CD8-positive, alpha-beta memory T cell (primary cell): ENCODE measurements at regions of chr16 and their contacts with region 1.

Region 1: GRCh38 chr16:81873843-81874752 is 95.0 kb downstream of the PLCG2 start:
- DNase-seq: peak in 4 of 5 donors; percentile 28 to 74 (median 42)
- H3K4me3 ChIP-seq: no peak overlapping the region
- H3K4me3 Mint-ChIP-seq: peak overlapping the region in 4 of 7 donors; percentile 12 to 52 (median 42)
- H3K27ac ChIP-seq: no peak overlapping the region
- H3K27ac Mint-ChIP-seq: peak overlapping the region in 5 of 8 donors; percentile 31 to 79 (median 73)
- H3K4me1 ChIP-seq: no peaks in the 10 kb centered on the region
- H3K4me1 Mint-ChIP-seq: peaks cover 22 to 25% (median 22%) of the 10 kb centered on the region in 3 donors
- H3K27me3 ChIP-seq: no peaks in the 10 kb centered on the region
- H3K27me3 Mint-ChIP-seq: peaks cover 0 to 4% of the 10 kb centered on the region in 2 donors

Region 2: DNA sequence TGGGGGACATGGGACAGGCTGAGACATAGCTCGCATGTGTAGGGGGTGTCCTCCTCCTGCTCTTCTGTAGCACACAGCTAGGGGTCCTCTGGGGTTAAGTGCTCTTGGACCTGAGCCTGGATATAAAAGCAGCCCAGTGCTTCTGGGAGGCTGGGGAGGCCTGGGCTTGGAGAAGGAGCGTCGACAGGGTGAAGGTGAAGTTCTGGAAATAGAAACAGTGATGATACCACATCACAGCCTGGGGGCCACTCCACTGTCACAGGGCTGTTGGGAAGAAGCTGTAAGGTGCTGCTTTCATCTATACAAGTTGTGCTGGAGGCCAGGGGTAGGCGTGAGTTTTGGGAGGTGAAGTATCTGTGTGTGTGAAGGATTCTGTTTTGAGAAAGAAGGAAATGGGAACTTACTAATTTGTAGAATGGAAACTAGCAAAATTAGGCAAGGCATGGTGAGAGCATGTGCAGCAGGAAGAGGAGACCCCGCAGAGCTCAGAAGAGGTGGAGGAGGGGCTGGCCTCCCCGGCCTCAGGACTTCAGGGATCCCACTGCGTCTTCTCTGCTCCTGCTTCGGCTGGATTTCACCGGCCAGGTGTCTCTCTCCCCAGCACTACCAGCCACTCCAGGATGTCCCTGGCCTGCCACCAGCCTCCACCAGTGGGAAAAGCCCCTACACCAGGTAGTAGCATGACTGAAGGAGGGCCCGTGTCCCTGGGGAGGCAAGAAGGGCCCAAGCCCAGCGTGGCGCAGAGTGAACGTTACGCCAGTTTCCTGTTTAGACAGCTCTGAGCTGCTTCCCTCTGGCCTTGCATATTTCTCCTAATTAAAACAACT is 75.6 kb before region 1 on chr16:
- CTCF ChIA-PET with region 1: interaction called, 13 read pairs
- POLR2A ChIA-PET with region 1: no interaction called
- DNase-seq: peak in 1 of 5 donors; percentile 54
- H3K4me3 ChIP-seq: no peak overlapping the region
- H3K4me3 Mint-ChIP-seq: peak overlapping the region in 6 of 7 donors; percentile 29 to 84 (median 70)
- H3K27ac ChIP-seq: peak overlapping the region; percentile 21
- H3K27ac Mint-ChIP-seq: peak overlapping the region; percentile 72 to 98 (median 88)
- H3K4me1 ChIP-seq: peaks cover 5% of the 10 kb centered on the region
- H3K4me1 Mint-ChIP-seq: peaks cover 33 to 49% (median 33%) of the 10 kb centered on the region in 3 donors
- H3K27me3 ChIP-seq: no peaks in the 10 kb centered on the region
- H3K27me3 Mint-ChIP-seq: no peaks in the 10 kb centered on the region

Region 3: GRCh38 chr16:81841722-81842121 is 32.4 kb before region 1 on chr16:
- CTCF ChIA-PET with region 1: interaction called, 11 read pairs
- POLR2A ChIA-PET with region 1: no interaction called
- DNase-seq: peak in 4 of 5 donors; percentile 4 to 75 (median 41)
- H3K4me3 ChIP-seq: peak overlapping the region; percentile 3
- H3K4me3 Mint-ChIP-seq: peak overlapping the region; percentile 37 to 92 (median 71)
- H3K27ac ChIP-seq: peak overlapping the region; percentile 75
- H3K27ac Mint-ChIP-seq: peak overlapping the region; percentile 74 to 95 (median 86)
- H3K4me1 ChIP-seq: no peaks in the 10 kb centered on the region
- H3K4me1 Mint-ChIP-seq: peaks cover 28 to 51% (median 36%) of the 10 kb centered on the region in 3 donors
- H3K27me3 ChIP-seq: no peaks in the 10 kb centered on the region
- H3K27me3 Mint-ChIP-seq: no peaks in the 10 kb centered on the region

Region 4: GRCh38 chr16:81885976-81886586 is 12.0 kb after region 1 on chr16:
- CTCF ChIA-PET with region 1: interaction called, 23 read pairs
- POLR2A ChIA-PET with region 1: no interaction called
- DNase-seq: peak in 1 of 5 donors; percentile 13
- H3K4me3 ChIP-seq: no peak overlapping the region
- H3K4me3 Mint-ChIP-seq: no peak overlapping the region
- H3K27ac ChIP-seq: no peak overlapping the region
- H3K27ac Mint-ChIP-seq: peak overlapping the region in 1 of 8 donors; percentile 33
- H3K4me1 ChIP-seq: no peaks in the 10 kb centered on the region
- H3K4me1 Mint-ChIP-seq: no peaks in the 10 kb centered on the region
- H3K27me3 ChIP-seq: no peaks in the 10 kb centered on the region
- H3K27me3 Mint-ChIP-seq: no peaks in the 10 kb centered on the region